AG04450 (cell line): ENCODE measurements at regions of chr12 and their contacts with region 1.

Region 1: GRCh38 chr12:49232940-49233841 is 31.7 kb upstream of the TUBA1C start:
- DNase-seq: no peak
- H3K4me3 ChIP-seq: peak overlapping the region; percentile 46
- H3K27ac ChIP-seq: peak overlapping the region; percentile 82
- H3K27me3 ChIP-seq: no peaks in the 10 kb centered on the region
- CTCF ChIP-seq: peak; percentile 40

Region 2: GRCh38 chr12:49188914-49189367 is 44.2 kb before region 1 on chr12 and contains the start of gene TUBA1A:
- CTCF ChIA-PET with region 1: interaction called, 9 read pairs
- POLR2A ChIA-PET with region 1: interaction called, 52 read pairs
- DNase-seq: peak; percentile 99
- H3K4me3 ChIP-seq: peak within 1 kb of the TSS; percentile 94
- H3K27ac ChIP-seq: peak within 1 kb of the TSS; percentile 94
- H3K27me3 ChIP-seq: no peaks in the 10 kb centered on the region
- CTCF ChIP-seq: no peak
- polyA plus RNA-seq, gene TUBA1A: 1,918 and 2,457 TPM in 2 replicates

Region 3: GRCh38 chr12:49219417-49220026 is 13.7 kb before region 1 on chr12:
- CTCF ChIA-PET with region 1: interaction called, 29 read pairs
- POLR2A ChIA-PET with region 1: interaction called, 13 read pairs
- DNase-seq: no peak
- H3K4me3 ChIP-seq: no peak overlapping the region
- H3K27ac ChIP-seq: no peak overlapping the region
- H3K27me3 ChIP-seq: no peaks in the 10 kb centered on the region
- CTCF ChIP-seq: no peak

Region 4: DNA sequence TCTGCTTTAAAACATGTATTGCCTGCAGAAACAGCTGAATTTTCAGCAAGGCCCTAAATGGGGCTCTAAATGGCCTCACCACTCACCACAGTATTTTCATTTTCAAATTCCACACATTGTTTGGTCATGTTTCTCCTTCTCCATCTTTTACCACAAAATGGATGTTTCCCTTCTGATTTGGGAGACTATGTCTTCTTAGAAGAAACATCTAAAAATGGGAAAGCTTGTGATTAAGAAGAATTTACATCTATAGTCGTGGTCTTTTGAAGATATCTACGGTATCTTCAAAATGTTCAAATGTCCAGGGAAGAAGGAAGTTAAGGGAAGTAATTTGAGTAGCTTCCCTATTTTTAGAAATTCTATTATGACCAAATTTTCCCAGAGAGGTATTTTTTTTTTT is 11.0 kb after region 1 on chr12:
- CTCF ChIA-PET with region 1: interaction called, 22 read pairs
- POLR2A ChIA-PET with region 1: interaction called, 5 read pairs
- DNase-seq: no peak
- H3K4me3 ChIP-seq: no peak overlapping the region
- H3K27ac ChIP-seq: peak overlapping the region; percentile 47
- H3K27me3 ChIP-seq: no peaks in the 10 kb centered on the region
- CTCF ChIP-seq: no peak

Region 5: DNA sequence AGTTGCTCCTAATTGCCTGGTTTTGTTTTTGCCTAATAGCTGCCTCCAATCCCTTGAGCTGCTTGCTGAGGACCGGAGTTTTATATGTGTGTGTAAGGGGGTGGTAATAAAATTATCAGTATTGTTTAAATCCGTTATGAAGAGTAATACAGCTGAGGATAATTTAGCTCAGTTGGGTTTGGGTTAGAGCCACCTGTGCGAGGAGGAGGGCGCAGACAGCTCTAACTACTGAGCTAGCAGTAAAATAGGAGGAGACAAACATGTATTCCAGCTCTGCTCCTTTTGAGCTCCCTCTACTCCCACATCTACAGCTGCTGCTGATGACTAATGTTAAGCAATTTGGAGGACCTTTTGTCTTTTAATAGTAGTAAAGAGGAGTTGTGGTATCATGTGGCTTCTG is 195.6 kb after region 1 on chr12:
- CTCF ChIA-PET with region 1: no interaction called
- POLR2A ChIA-PET with region 1: no interaction called
- DNase-seq: peak; percentile 24
- H3K4me3 ChIP-seq: no peak overlapping the region
- H3K27ac ChIP-seq: peak overlapping the region; percentile 41
- H3K27me3 ChIP-seq: no peaks in the 10 kb centered on the region
- CTCF ChIP-seq: no peak